Prostate gland (tissue), 2 donors: ENCODE measurements at regions of chr12 and their contacts with region 1.

Region 1: GRCh38 chr12:117025481-117026151 is 73.6 kb downstream of the TESC start:
- DNase-seq: peak; percentile 80
- H3K4me3 ChIP-seq: no peak overlapping the region
- H3K27ac ChIP-seq: no peak overlapping the region
- H3K4me1 ChIP-seq: peaks cover 6% of the 10 kb centered on the region
- H3K27me3 ChIP-seq: no peaks in the 10 kb centered on the region
- CTCF ChIP-seq: peak; percentile 77 to 97 (median 96)
- POLR2A ChIP-seq: no peak

Region 2: DNA sequence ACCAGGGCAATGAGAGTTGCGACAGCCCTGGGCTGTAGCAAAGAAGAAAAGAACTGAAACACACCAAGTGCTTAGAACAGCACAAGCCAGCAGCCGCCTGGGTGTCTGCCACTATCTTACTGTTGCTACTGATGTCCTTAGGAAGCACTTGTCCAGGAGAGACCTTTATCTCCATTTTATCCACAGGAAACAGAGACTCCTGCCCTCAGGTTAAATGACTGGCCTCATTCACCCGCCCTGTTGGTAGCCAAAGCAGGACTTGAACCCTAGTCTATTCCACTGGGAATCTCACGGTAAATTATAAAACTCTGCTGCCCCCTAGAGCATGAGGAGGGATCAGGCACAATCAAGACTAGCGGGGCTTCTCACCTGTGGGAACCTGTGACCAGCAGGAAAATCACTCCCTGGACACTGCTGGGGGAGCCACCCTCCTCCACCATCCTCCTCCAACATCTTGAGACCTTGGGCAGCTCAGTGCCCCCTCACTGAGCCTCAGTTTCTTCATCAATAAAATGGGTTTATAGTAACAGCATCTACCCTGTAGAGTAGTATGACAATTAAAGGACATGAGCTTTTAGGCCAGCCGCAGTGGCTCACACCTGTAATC is 94.1 kb after region 1 on chr12:
- intact Hi-C with region 1: loop called (anchors 2 kb)
- DNase-seq: no peak
- H3K4me3 ChIP-seq: no peak overlapping the region
- H3K27ac ChIP-seq: no peak overlapping the region
- H3K4me1 ChIP-seq: no peaks in the 10 kb centered on the region
- H3K27me3 ChIP-seq: no peaks in the 10 kb centered on the region
- CTCF ChIP-seq: peak in 3 of 4 experiments; percentile 68 to 72 (median 72)
- POLR2A ChIP-seq: no peak

Region 3: GRCh38 chr12:117151195-117152031 is 125.8 kb after region 1 on chr12:
- intact Hi-C with region 1: no loop called
- DNase-seq: peak; percentile 30
- H3K4me3 ChIP-seq: no peak overlapping the region
- H3K27ac ChIP-seq: no peak overlapping the region
- H3K4me1 ChIP-seq: no peaks in the 10 kb centered on the region
- H3K27me3 ChIP-seq: no peaks in the 10 kb centered on the region
- CTCF ChIP-seq: peak in 3 of 4 experiments; percentile 43 to 48 (median 45)
- POLR2A ChIP-seq: no peak

Region 4: DNA sequence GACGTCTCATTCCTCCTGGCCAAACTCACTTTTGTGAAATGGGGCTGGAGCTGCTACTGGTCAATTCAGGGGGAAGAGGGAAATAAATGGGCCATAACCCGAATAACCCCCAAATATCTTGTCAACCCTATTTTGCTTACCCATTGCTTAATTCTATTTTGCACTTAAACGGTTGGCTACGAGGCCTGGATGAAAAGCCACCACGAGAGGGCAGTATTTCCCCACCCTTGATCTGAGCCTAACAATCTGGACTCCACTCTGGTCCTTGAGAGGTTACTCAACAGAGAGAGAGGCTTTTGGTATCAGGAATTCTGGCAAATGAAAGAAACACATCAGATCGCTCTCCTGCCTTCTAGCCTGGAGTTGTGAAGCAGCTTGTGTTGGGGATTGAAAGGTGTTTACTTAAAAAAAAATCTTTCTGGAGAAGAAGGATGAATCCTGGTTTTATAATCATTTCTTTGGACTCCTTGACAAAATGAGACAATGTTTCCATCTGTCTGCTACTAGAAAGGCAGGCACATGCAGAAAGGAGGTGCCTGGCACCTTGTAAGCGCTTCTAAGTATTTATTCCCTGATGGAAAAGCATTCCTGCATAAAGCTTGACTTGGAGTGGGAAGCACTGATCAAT is 187.1 kb after region 1 on chr12:
- intact Hi-C with region 1: no loop called
- DNase-seq: peak; percentile 70
- H3K4me3 ChIP-seq: no peak overlapping the region
- H3K27ac ChIP-seq: no peak overlapping the region
- H3K4me1 ChIP-seq: no peaks in the 10 kb centered on the region
- H3K27me3 ChIP-seq: no peaks in the 10 kb centered on the region
- CTCF ChIP-seq: peak; percentile 75 to 85 (median 82)
- POLR2A ChIP-seq: no peak

Region 5: GRCh38 chr12:117231750-117232149 is 206.1 kb after region 1 on chr12:
- intact Hi-C with region 1: no loop called
- DNase-seq: no peak
- H3K4me3 ChIP-seq: no peak overlapping the region
- H3K27ac ChIP-seq: no peak overlapping the region
- H3K4me1 ChIP-seq: no peaks in the 10 kb centered on the region
- H3K27me3 ChIP-seq: no peaks in the 10 kb centered on the region
- CTCF ChIP-seq: no peak
- POLR2A ChIP-seq: no peak

Region 6: DNA sequence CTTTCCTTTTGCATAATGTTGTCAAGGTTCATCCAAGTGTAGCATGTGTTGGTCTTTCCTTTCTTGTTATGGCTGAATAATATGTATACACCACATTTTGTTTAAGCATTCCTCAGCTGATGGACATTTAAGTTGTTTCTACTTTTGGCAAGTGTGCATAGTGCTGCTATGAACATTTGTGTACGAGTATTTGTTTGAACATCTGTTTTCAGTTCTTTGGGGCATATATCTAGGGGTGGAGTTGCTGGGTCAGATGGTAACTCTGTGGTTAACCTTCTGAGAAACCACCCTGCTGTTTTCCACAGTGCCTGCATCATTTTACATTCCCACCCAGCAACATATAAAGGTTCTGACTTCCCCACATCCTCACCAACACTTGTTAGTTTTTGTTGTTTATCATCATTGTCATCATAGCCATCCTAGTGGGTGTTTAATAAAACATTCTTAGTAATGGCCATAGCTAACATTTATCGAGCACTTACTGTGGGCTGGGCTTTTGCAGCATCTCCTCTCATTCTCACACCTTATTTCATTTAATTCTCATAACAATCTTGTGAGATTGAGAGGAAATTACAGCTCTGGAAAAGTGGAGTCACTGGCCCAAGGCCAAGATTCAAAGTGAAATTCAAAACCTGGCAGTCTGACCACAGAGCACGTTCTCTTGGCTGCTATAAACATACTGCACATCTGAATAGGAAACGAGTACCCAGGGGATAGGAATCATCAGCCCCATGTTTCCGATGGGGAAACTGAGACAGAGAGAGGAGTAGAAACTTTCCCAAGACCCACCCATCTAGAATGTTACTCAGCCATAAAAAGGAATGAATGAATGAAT is 749.5 kb after region 1 on chr12:
- intact Hi-C with region 1: no loop called
- DNase-seq: no peak
- H3K4me3 ChIP-seq: no peak overlapping the region
- H3K27ac ChIP-seq: no peak overlapping the region
- H3K4me1 ChIP-seq: no peaks in the 10 kb centered on the region
- H3K27me3 ChIP-seq: no peaks in the 10 kb centered on the region
- CTCF ChIP-seq: no peak
- POLR2A ChIP-seq: no peak